ENCODE measurements at regions of chr12 and their contacts with region 1.

Region 1: GRCh38 chr12:118372541-118373495 is at the start of gene TAOK3:
- DNase-seq: peak; percentile 96 to 100 (median 98)

Region 2: GRCh38 chr12:117874842-117875434 is 497.9 kb before region 1 on chr12:
- intact Hi-C with region 1: loop called (anchors 5 kb)
- DNase-seq: peak; percentile 65 to 96 (median 80)

Region 3: GRCh38 chr12:118061011-118061875 is 311.6 kb before region 1 on chr12 and contains the start of gene WSB2:
- intact Hi-C with region 1: loop called (anchors 2 kb)
- DNase-seq: peak; percentile 68 to 95 (median 79)

Region 4: GRCh38 chr12:118120579-118121363 is 252.0 kb before region 1 on chr12:
- intact Hi-C with region 1: loop called (anchors 5 kb)
- DNase-seq: peak; percentile 29 to 94 (median 77)

Region 5: GRCh38 chr12:118183705-118184104 is 189.1 kb before region 1 on chr12:
- intact Hi-C with region 1: loop called (anchors 1 kb)
- DNase-seq: no peak

Region 6: GRCh38 chr12:118302066-118302465 is 70.8 kb before region 1 on chr12:
- intact Hi-C with region 1: loop called (anchors 5 kb)
- DNase-seq: no peak